ENCODE measurements at regions of chr3 and their contacts with region 1.

Region 1: GRCh38 chr3:124467980-124468902 is 262.0 kb upstream of the UMPS start:
- DNase-seq: peak; percentile 33
- ATAC-seq: peak; percentile 71
- H3K4me3 Mint-ChIP-seq: no peak overlapping the region
- H3K27ac Mint-ChIP-seq: no peak overlapping the region
- H3K4me1 Mint-ChIP-seq: no peaks in the 10 kb centered on the region
- H3K27me3 Mint-ChIP-seq: peaks cover 16% of the 10 kb centered on the region
- CTCF ChIP-seq: peak; percentile 93

Region 2: GRCh38 chr3:124306665-124307064 is 161.6 kb before region 1 on chr3:
- CTCF ChIA-PET with region 1: no interaction called
- POLR2A ChIA-PET with region 1: no interaction called
- intact Hi-C with region 1: no loop called
- DNase-seq: no peak
- ATAC-seq: no peak
- H3K4me3 Mint-ChIP-seq: no peak overlapping the region
- H3K27ac Mint-ChIP-seq: no peak overlapping the region
- H3K4me1 Mint-ChIP-seq: no peaks in the 10 kb centered on the region
- H3K27me3 Mint-ChIP-seq: peaks cover 2% of the 10 kb centered on the region
- CTCF ChIP-seq: no peak

Region 3: GRCh38 chr3:124351430-124352148 is 116.7 kb before region 1 on chr3:
- CTCF ChIA-PET with region 1: interaction called, 4 read pairs
- POLR2A ChIA-PET with region 1: no interaction called
- intact Hi-C with region 1: loop called (anchors 10 kb)
- DNase-seq: no peak
- ATAC-seq: no peak
- H3K4me3 Mint-ChIP-seq: no peak overlapping the region
- H3K27ac Mint-ChIP-seq: no peak overlapping the region
- H3K4me1 Mint-ChIP-seq: no peaks in the 10 kb centered on the region
- H3K27me3 Mint-ChIP-seq: peaks cover 2% of the 10 kb centered on the region
- CTCF ChIP-seq: no peak

Region 4: GRCh38 chr3:124407260-124407659 is 61.0 kb before region 1 on chr3:
- CTCF ChIA-PET with region 1: no interaction called
- POLR2A ChIA-PET with region 1: no interaction called
- intact Hi-C with region 1: no loop called
- DNase-seq: no peak
- ATAC-seq: no peak
- H3K4me3 Mint-ChIP-seq: no peak overlapping the region
- H3K27ac Mint-ChIP-seq: no peak overlapping the region
- H3K4me1 Mint-ChIP-seq: no peaks in the 10 kb centered on the region
- H3K27me3 Mint-ChIP-seq: peaks cover 8% of the 10 kb centered on the region
- CTCF ChIP-seq: no peak

Region 5: DNA sequence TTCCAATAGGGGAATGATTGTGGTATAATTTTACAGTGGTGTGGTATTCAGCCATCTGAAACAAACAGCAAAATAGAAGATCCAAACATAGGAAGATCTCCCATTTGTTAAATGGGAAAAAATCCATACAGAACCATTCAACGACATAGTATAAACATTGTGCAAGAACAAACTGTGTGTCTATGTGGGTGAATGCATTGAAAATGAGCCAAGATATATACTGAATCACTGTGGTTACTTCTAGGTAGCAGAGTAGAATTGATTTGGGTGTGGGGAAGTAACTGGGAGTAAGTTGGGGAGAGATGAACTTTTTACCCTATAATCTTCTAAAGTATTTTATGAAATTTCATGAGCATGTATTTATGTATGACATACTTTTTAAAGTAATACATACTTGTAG is 138.9 kb after region 1 on chr3:
- CTCF ChIA-PET with region 1: no interaction called
- POLR2A ChIA-PET with region 1: no interaction called
- intact Hi-C with region 1: no loop called
- DNase-seq: no peak
- ATAC-seq: no peak
- H3K4me3 Mint-ChIP-seq: no peak overlapping the region
- H3K27ac Mint-ChIP-seq: no peak overlapping the region
- H3K4me1 Mint-ChIP-seq: no peaks in the 10 kb centered on the region
- H3K27me3 Mint-ChIP-seq: peaks cover 11% of the 10 kb centered on the region
- CTCF ChIP-seq: no peak